ENCODE measurements at regions of chr21 and their contacts with region 1.

Region 1: GRCh38 chr21:33924079-33924765 is 8.6 kb upstream of the ATP5PO start:
- DNase-seq: peak; percentile 95
- H3K4me3 ChIP-seq: no peak overlapping the region
- H3K27ac ChIP-seq: no peak overlapping the region
- H3K4me1 ChIP-seq: no peaks in the 10 kb centered on the region
- H3K27me3 ChIP-seq: no peaks in the 10 kb centered on the region
- CTCF ChIP-seq: peak; percentile 94

Region 2: GRCh38 chr21:34202553-34203372 is 278.5 kb after region 1 on chr21:
- intact Hi-C with region 1: loop called (anchors 5 kb)
- DNase-seq: no peak
- H3K4me3 ChIP-seq: no peak overlapping the region
- H3K27ac ChIP-seq: no peak overlapping the region
- H3K4me1 ChIP-seq: no peaks in the 10 kb centered on the region
- H3K27me3 ChIP-seq: no peaks in the 10 kb centered on the region
- CTCF ChIP-seq: no peak

Region 3: GRCh38 chr21:34243562-34243961 is 319.3 kb after region 1 on chr21:
- intact Hi-C with region 1: loop called (anchors 5 kb)
- DNase-seq: peak; percentile 29
- H3K4me3 ChIP-seq: no peak overlapping the region
- H3K27ac ChIP-seq: no peak overlapping the region
- H3K4me1 ChIP-seq: no peaks in the 10 kb centered on the region
- H3K27me3 ChIP-seq: no peaks in the 10 kb centered on the region
- CTCF ChIP-seq: peak; percentile 39

Region 4: GRCh38 chr21:34351786-34352241 is 427.6 kb after region 1 on chr21:
- intact Hi-C with region 1: loop called (anchors 2 kb)
- DNase-seq: peak; percentile 50
- H3K4me3 ChIP-seq: no peak overlapping the region
- H3K27ac ChIP-seq: no peak overlapping the region
- H3K4me1 ChIP-seq: no peaks in the 10 kb centered on the region
- H3K27me3 ChIP-seq: no peaks in the 10 kb centered on the region
- CTCF ChIP-seq: peak; percentile 40

Measured in colonic mucosa (tissue), 4 donors.